ENCODE measurements at regions of chr17 and their contacts with region 1.

Region 1: DNA sequence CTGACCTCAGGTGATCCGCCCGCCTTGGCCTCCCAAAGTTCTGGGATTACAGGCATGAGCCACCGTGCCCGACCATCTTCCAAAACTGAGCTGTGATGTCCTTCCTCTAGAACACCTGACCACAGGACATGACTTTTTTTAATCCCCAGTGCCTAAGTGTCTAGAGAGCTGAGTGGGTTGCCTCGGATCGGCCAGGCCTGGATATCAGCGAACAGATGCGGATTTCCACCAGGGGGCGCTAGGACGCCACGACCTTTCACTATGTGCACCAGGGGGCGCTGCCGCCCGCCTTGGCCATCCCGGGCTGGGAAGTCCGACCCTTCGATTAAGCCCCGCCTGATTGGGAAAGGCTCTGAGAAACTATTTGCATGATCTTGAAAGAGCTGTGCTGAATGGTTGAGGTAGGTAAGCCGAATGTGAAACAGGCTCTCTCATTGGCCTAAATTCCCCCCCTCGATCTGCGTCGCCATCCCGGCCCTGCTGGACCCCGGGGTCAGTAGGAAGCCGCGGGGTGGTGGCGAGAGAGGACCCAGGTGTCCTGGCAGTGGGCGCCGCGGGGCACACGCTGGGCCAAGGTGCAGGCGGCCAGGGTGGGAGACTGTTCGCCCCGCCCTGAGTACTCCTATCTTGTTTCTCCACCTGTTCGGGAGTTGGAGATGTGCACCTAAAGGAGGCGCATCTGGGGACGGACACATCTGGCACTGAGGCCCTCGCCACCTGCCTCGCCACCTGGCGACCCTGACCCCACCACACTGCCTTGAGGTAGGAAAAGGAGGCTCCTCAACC is at the start of gene ACBD4:
- DNase-seq: peak; percentile 94
- H3K4me3 ChIP-seq: peak within 1 kb of the TSS; percentile 54
- H3K27ac ChIP-seq: peak within 1 kb of the TSS; percentile 42
- H3K4me1 ChIP-seq: no peaks in the 10 kb centered on the region
- H3K27me3 ChIP-seq: no peaks in the 10 kb centered on the region
- CTCF ChIP-seq: peak; percentile 99
- total RNA-seq, gene ACBD4: 1.4 and 4.2 TPM in 2 replicates

Region 2: GRCh38 chr17:44775136-44775837 is 360.1 kb before region 1 on chr17:
- CTCF ChIA-PET with region 1: interaction called, 3 read pairs
- POLR2A ChIA-PET with region 1: no interaction called
- intact Hi-C with region 1: loop called (anchors 5 kb)
- DNase-seq: peak; percentile 97
- H3K4me3 ChIP-seq: peak overlapping the region; percentile 34
- H3K27ac ChIP-seq: no peak overlapping the region
- H3K4me1 ChIP-seq: no peaks in the 10 kb centered on the region
- H3K27me3 ChIP-seq: no peaks in the 10 kb centered on the region
- CTCF ChIP-seq: no peak

Region 3: GRCh38 chr17:45148183-45149036 is 13.0 kb after region 1 on chr17 and contains the start of gene HEXIM1:
- CTCF ChIA-PET with region 1: interaction called, 19 read pairs
- POLR2A ChIA-PET with region 1: interaction called, 3 read pairs
- intact Hi-C with region 1: no loop called
- DNase-seq: peak; percentile 98
- H3K4me3 ChIP-seq: peak within 1 kb of the TSS; percentile 81
- H3K27ac ChIP-seq: peak within 1 kb of the TSS; percentile 98
- H3K4me1 ChIP-seq: peaks cover 19% of the 10 kb centered on the region
- H3K27me3 ChIP-seq: no peaks in the 10 kb centered on the region
- CTCF ChIP-seq: no peak
- total RNA-seq, gene HEXIM1: 21.2 and 22.1 TPM in 2 replicates

Region 4: GRCh38 chr17:45161019-45161825 is 25.8 kb after region 1 on chr17:
- CTCF ChIA-PET with region 1: interaction called, 13 read pairs
- POLR2A ChIA-PET with region 1: no interaction called
- intact Hi-C with region 1: no loop called
- DNase-seq: peak; percentile 97
- H3K4me3 ChIP-seq: peak overlapping the region; percentile 90
- H3K27ac ChIP-seq: peak overlapping the region; percentile 98
- H3K4me1 ChIP-seq: peaks cover 6% of the 10 kb centered on the region
- H3K27me3 ChIP-seq: no peaks in the 10 kb centered on the region
- CTCF ChIP-seq: no peak

Region 5: GRCh38 chr17:45175759-45176115 is 40.4 kb after region 1 on chr17:
- CTCF ChIA-PET with region 1: interaction called, 15 read pairs
- POLR2A ChIA-PET with region 1: no interaction called
- intact Hi-C with region 1: no loop called
- DNase-seq: no peak
- H3K4me3 ChIP-seq: no peak overlapping the region
- H3K27ac ChIP-seq: no peak overlapping the region
- H3K4me1 ChIP-seq: peaks cover 20% of the 10 kb centered on the region
- H3K27me3 ChIP-seq: no peaks in the 10 kb centered on the region
- CTCF ChIP-seq: no peak

Region 6: DNA sequence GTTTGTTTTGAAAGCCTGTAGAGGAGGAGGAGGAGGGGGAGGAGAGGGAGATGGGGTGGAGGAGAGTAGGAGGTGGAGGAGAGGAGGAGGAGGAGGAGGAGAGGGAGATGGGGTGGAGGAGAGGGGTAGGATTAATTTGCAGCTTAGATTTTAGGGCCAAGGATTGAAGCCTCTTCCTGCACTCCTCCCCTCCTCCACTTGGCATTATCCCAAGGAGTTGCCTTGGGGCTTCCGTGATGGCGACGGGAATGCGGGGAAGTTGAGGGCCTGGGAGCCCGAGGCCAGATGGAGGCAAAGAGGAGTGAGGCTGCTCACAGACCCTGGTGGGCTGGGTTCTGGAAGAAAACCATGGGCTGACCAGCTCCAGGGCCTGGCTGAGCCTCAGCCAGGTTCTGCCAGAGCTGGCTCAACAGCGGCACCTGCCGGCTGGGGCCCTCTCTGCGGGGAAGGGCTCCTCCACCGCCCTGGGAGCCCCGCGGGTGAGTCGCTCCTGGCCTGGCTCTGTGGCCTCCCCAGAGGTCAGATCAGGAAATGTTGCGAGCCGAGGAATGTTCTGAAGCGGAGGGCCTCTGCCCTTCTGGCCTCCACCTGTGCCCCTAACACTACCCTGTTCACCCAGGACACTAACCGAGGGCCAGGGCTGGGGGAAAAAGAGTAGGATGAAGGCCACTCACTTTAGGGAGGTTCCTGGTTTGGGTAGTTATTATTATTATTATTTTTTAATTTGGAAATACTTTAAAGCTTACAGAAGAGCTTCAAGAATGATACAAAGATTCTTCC is 62.4 kb after region 1 on chr17:
- CTCF ChIA-PET with region 1: interaction called, 45 read pairs
- POLR2A ChIA-PET with region 1: no interaction called
- intact Hi-C with region 1: loop called (anchors 1 kb)
- DNase-seq: peak; percentile 68
- H3K4me3 ChIP-seq: no peak overlapping the region
- H3K27ac ChIP-seq: no peak overlapping the region
- H3K4me1 ChIP-seq: peaks cover 4% of the 10 kb centered on the region
- H3K27me3 ChIP-seq: no peaks in the 10 kb centered on the region
- CTCF ChIP-seq: peak; percentile 84

Region 7: DNA sequence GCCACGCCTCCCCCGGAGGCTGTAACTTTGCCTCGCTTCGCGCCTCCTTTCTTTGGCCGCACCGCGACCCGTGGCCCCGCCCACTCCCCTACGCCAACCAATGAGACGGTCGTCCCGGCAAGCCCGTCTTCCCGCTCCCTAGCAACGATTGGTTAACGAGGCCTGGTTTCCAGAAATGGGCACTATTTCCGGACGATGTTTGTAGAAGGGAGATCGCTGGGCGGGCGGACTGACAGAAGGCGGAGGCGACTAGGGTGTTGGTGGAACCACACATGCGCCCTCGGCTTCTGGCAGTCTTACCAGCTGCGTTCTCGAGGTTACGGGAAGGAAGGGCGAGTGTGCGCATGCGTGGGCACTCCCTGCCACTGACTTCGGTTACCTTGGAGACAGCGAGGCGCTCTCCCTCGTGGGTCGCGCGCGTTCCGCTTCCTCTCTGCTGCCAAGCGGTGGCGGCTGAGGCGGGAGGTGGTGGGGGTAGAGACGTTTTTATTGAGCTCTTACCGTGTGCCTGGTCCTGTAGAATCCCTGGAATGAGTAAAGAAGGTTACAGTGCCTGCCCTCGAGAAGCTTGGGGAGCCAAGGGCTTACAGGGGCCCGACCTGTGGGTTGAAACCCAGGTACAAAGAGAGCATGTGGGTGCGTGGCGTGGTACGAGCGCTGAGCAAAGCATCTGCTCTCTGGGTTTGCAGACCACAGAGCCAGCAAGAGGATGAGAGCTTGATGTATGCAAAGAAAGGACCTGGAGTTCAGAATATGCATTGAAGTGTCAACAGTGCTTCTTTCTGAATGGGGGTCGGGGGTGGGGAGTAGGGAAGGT is 181.9 kb after region 1 on chr17:
- CTCF ChIA-PET with region 1: no interaction called
- POLR2A ChIA-PET with region 1: no interaction called
- intact Hi-C with region 1: no loop called
- DNase-seq: peak; percentile 98
- H3K4me3 ChIP-seq: peak overlapping the region; percentile 67
- H3K27ac ChIP-seq: peak overlapping the region; percentile 80
- H3K4me1 ChIP-seq: peaks cover 16% of the 10 kb centered on the region
- H3K27me3 ChIP-seq: no peaks in the 10 kb centered on the region
- CTCF ChIP-seq: no peak

Region 8: GRCh38 chr17:45385331-45385997 is 250.1 kb after region 1 on chr17:
- CTCF ChIA-PET with region 1: interaction called, 3 read pairs
- POLR2A ChIA-PET with region 1: no interaction called
- intact Hi-C with region 1: loop called (anchors 10 kb)
- DNase-seq: peak; percentile 73
- H3K4me3 ChIP-seq: no peak overlapping the region
- H3K27ac ChIP-seq: no peak overlapping the region
- H3K4me1 ChIP-seq: no peaks in the 10 kb centered on the region
- H3K27me3 ChIP-seq: no peaks in the 10 kb centered on the region
- CTCF ChIP-seq: peak; percentile 78

Measured in A673 (cell line).